ENCODE measurements at regions of chr1 and their contacts with region 1.

Region 1: GRCh38 chr1:113207019-113207418 is 134.0 kb downstream of the LRIG2 start:
- DNase-seq: no peak
- H3K4me3 ChIP-seq: no peak overlapping the region
- H3K27ac ChIP-seq: no peak overlapping the region
- H3K4me1 ChIP-seq: peaks cover 25% of the 10 kb centered on the region
- H3K27me3 ChIP-seq: no peaks in the 10 kb centered on the region
- CTCF ChIP-seq: no peak

Region 2: GRCh38 chr1:112735752-112736151 is 471.3 kb before region 1 on chr1:
- CTCF ChIA-PET with region 1: no interaction called
- POLR2A ChIA-PET with region 1: no interaction called
- intact Hi-C with region 1: no loop called
- DNase-seq: peak; percentile 18 to 90
- H3K4me3 ChIP-seq: no peak overlapping the region
- H3K27ac ChIP-seq: peak overlapping the region; percentile 36
- H3K4me1 ChIP-seq: peaks cover 12% of the 10 kb centered on the region; the same call in 1 of the 2 replicates
- H3K27me3 ChIP-seq: no peaks in the 10 kb centered on the region
- CTCF ChIP-seq: no peak

Region 3: GRCh38 chr1:112937070-112937469 is 269.9 kb before region 1 on chr1:
- CTCF ChIA-PET with region 1: no interaction called
- POLR2A ChIA-PET with region 1: no interaction called
- intact Hi-C with region 1: no loop called
- DNase-seq: no peak
- H3K4me3 ChIP-seq: no peak overlapping the region
- H3K27ac ChIP-seq: peak overlapping the region; percentile 93
- H3K4me1 ChIP-seq: peaks cover 36% of the 10 kb centered on the region
- H3K27me3 ChIP-seq: no peaks in the 10 kb centered on the region
- CTCF ChIP-seq: no peak

Region 4: GRCh38 chr1:113616156-113616555 is 409.1 kb after region 1 on chr1:
- CTCF ChIA-PET with region 1: no interaction called
- POLR2A ChIA-PET with region 1: interaction called, 14 read pairs
- intact Hi-C with region 1: no loop called
- DNase-seq: no peak
- H3K4me3 ChIP-seq: no peak overlapping the region
- H3K27ac ChIP-seq: no peak overlapping the region
- H3K4me1 ChIP-seq: peaks cover 4% of the 10 kb centered on the region; the same call in 1 of the 2 replicates
- H3K27me3 ChIP-seq: no peaks in the 10 kb centered on the region
- CTCF ChIP-seq: no peak

Region 5: GRCh38 chr1:113855630-113856400 is 648.8 kb after region 1 on chr1:
- CTCF ChIA-PET with region 1: no interaction called
- POLR2A ChIA-PET with region 1: no interaction called
- intact Hi-C with region 1: no loop called
- DNase-seq: no peak
- H3K4me3 ChIP-seq: no peak overlapping the region
- H3K27ac ChIP-seq: no peak overlapping the region
- H3K4me1 ChIP-seq: no peaks in the 10 kb centered on the region
- H3K27me3 ChIP-seq: no peaks in the 10 kb centered on the region
- CTCF ChIP-seq: no peak